ENCODE measurements at regions of chr5 and their contacts with region 1.

Region 1: GRCh38 chr5:111254613-111255012 is 30.4 kb downstream of the CAMK4 start:
- DNase-seq: peak; percentile 41
- H3K4me3 Mint-ChIP-seq: peak overlapping the region; percentile 35
- H3K27ac Mint-ChIP-seq: peak overlapping the region; percentile 97
- H3K4me1 Mint-ChIP-seq: peaks cover 70% of the 10 kb centered on the region
- H3K27me3 Mint-ChIP-seq: no peaks in the 10 kb centered on the region

Region 2: GRCh38 chr5:110996742-110997141 is 257.9 kb before region 1 on chr5:
- intact Hi-C with region 1: no loop called
- DNase-seq: no peak
- H3K4me3 Mint-ChIP-seq: no peak overlapping the region
- H3K27ac Mint-ChIP-seq: no peak overlapping the region
- H3K4me1 Mint-ChIP-seq: no peaks in the 10 kb centered on the region
- H3K27me3 Mint-ChIP-seq: no peaks in the 10 kb centered on the region

Region 3: GRCh38 chr5:111237470-111237869 is 17.1 kb before region 1 on chr5:
- intact Hi-C with region 1: loop called (anchors 1 kb)
- DNase-seq: no peak
- H3K4me3 Mint-ChIP-seq: peak overlapping the region; percentile 40
- H3K27ac Mint-ChIP-seq: peak overlapping the region; percentile 87
- H3K4me1 Mint-ChIP-seq: peaks cover 75% of the 10 kb centered on the region
- H3K27me3 Mint-ChIP-seq: no peaks in the 10 kb centered on the region

Region 4: DNA sequence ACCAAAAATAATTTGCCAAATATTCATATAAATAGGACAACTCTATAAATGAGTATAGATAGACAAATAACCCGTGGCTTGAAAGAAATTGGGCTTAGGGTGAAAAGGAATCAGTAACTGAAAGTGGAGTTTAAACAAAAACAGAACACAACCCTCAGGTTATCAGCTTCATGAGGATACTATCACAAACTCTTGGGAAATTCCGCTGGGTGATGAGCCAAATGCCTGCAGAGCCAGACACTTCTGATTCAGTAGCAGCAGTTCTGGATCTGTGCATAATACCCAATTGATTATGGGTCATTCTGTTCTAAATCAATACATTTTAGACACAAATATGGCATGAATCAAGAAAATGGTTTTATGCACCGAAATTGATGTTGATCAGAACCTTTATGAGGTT is 42.0 kb after region 1 on chr5:
- intact Hi-C with region 1: no loop called
- DNase-seq: no peak
- H3K4me3 Mint-ChIP-seq: no peak overlapping the region
- H3K27ac Mint-ChIP-seq: no peak overlapping the region
- H3K4me1 Mint-ChIP-seq: peaks cover 8% of the 10 kb centered on the region
- H3K27me3 Mint-ChIP-seq: no peaks in the 10 kb centered on the region

Region 5: GRCh38 chr5:111415053-111415452 is 160.4 kb after region 1 on chr5:
- intact Hi-C with region 1: no loop called
- DNase-seq: no peak
- H3K4me3 Mint-ChIP-seq: no peak overlapping the region
- H3K27ac Mint-ChIP-seq: no peak overlapping the region
- H3K4me1 Mint-ChIP-seq: peaks cover 6% of the 10 kb centered on the region
- H3K27me3 Mint-ChIP-seq: no peaks in the 10 kb centered on the region

Measured in activated T-helper 2 cell treated with anti-CD3 and anti-CD28 coated beads, Interferon-gamma antibody, Interleukin-2, Interleukin-4, amounts not matched to agents 10 μg/mL and 5 μg/mL and 100 μg/mL, durations not matched to agents 14 hours and 24 hours and 36 hours (primary cell).